ENCODE measurements at regions of chr6 and their contacts with region 1.

Region 1: GRCh38 chr6:128520436-128521281 is at the start of gene PTPRK:
- DNase-seq: peak; percentile 91
- ATAC-seq: peak; percentile 86
- H3K4me3 ChIP-seq: peak within 1 kb of the TSS; percentile 93
- H3K27ac ChIP-seq: peak within 1 kb of the TSS; percentile 98
- H3K4me1 ChIP-seq: peaks cover 5% of the 10 kb centered on the region; the same call in 1 of the 2 replicates
- H3K27me3 ChIP-seq: no peaks in the 10 kb centered on the region
- CTCF ChIP-seq: peak; percentile 69
- POLR2A ChIP-seq: peak; percentile 90
- RAD21 ChIP-seq: peak; percentile 53
- total RNA-seq, gene PTPRK: 66.1 and 80.8 TPM in 2 replicates

Region 2: DNA sequence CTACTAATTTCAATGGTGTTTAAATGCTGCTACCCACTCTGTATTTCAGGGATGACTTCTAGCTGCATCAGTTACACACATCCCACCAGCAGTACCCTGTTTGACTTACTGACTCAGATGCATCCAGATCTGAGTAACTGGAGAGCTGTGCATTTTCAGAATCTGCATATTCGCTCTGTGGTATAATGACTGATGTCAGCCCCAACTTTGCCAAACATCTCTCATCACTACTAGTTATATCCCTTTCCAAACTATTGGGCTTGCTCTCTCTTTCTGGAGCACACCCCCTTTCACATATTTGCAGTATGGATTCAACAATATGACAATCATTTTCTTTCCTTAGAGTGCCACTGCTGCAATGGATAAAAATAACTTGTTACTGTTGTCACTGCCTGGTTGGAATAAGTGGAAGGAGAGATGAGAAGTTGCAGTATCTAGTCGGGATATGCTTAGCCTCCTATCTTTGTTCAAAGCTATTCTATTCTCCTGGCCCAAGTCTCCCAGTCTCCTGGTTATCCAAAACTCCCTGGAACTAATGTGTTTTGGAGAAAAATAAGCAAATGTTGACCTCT is 1405.5 kb before region 1 on chr6:
- CTCF ChIA-PET with region 1: no interaction called
- POLR2A ChIA-PET with region 1: no interaction called
- dilution Hi-C with region 1: no loop called
- in situ Hi-C with region 1: no loop called
- intact Hi-C with region 1: no loop called
- DNase-seq: no peak
- ATAC-seq: no peak
- H3K4me3 ChIP-seq: no peak overlapping the region
- H3K27ac ChIP-seq: no peak overlapping the region
- H3K4me1 ChIP-seq: no peaks in the 10 kb centered on the region; the same call in 1 of the 2 replicates
- H3K27me3 ChIP-seq: peaks cover 58% of the 10 kb centered on the region
- CTCF ChIP-seq: no peak
- POLR2A ChIP-seq: no peak
- RAD21 ChIP-seq: no peak

Region 3: DNA sequence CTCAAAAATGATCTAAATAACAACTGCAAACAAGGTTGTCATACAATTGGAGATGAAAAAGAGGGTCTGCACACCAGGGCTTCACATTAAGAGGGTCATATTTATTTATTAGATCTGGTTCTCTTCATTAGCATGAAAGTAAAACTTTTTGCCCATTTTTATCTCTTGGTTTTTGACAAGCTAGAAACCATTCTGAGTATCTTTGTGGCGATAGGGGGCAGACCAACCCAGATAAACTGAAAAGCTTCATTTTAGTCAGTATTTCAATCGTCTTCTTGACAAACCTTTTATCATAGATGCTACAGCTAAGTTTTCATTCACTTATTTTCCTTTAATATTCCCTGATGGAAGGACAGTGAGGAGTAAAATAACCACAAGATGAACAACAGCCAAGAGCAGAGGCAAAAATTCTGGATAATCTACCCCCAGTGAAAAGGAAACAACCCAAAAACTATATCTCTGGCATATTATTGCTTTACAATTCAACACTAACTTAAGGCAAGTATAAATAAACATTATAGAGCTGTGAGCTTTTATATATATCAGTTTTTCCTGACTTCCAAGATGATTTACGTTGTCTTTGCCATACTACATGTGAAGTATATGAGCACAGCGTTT is 665.0 kb before region 1 on chr6:
- CTCF ChIA-PET with region 1: no interaction called
- POLR2A ChIA-PET with region 1: no interaction called
- dilution Hi-C with region 1: no loop called
- in situ Hi-C with region 1: no loop called
- intact Hi-C with region 1: loop called (anchors 2 kb)
- DNase-seq: peak; percentile 45
- ATAC-seq: peak; percentile 60; the same call in 1 of the 2 replicates
- H3K4me3 ChIP-seq: no peak overlapping the region
- H3K27ac ChIP-seq: no peak overlapping the region
- H3K4me1 ChIP-seq: no peaks in the 10 kb centered on the region
- H3K27me3 ChIP-seq: no peaks in the 10 kb centered on the region
- CTCF ChIP-seq: peak; percentile 61
- POLR2A ChIP-seq: no peak
- RAD21 ChIP-seq: peak; percentile 65

Region 4: DNA sequence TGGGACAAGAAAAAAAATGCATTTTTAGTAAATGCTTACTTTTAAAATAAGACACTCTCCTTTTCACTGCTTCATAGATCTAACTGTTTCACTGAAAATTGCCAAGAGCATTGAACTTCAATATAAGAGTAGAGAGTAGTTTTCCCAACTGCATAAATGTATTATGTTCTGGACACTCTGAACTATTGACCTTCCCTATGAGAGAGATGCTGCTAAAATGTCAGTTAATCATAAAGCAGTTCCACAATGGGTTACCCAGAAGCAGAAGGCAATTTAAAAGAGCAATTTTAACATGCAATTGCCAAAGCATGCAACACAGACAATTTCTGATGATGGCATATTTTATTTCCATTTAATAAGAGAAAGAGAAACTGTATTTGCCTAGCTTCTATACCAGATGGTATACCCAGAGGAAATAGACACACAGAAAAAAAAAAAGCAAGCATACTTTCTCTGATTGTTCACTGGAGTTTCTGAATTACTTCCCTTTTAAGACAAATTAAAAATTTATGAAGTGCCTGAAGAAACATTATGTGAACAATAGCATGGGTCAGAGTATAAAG is 340.7 kb before region 1 on chr6:
- CTCF ChIA-PET with region 1: no interaction called
- POLR2A ChIA-PET with region 1: no interaction called
- dilution Hi-C with region 1: no loop called
- in situ Hi-C with region 1: no loop called
- intact Hi-C with region 1: loop called (anchors 10 kb)
- DNase-seq: no peak
- ATAC-seq: no peak
- H3K4me3 ChIP-seq: no peak overlapping the region
- H3K27ac ChIP-seq: no peak overlapping the region
- H3K4me1 ChIP-seq: no peaks in the 10 kb centered on the region
- H3K27me3 ChIP-seq: no peaks in the 10 kb centered on the region
- CTCF ChIP-seq: no peak
- POLR2A ChIP-seq: no peak
- RAD21 ChIP-seq: no peak

Region 5: DNA sequence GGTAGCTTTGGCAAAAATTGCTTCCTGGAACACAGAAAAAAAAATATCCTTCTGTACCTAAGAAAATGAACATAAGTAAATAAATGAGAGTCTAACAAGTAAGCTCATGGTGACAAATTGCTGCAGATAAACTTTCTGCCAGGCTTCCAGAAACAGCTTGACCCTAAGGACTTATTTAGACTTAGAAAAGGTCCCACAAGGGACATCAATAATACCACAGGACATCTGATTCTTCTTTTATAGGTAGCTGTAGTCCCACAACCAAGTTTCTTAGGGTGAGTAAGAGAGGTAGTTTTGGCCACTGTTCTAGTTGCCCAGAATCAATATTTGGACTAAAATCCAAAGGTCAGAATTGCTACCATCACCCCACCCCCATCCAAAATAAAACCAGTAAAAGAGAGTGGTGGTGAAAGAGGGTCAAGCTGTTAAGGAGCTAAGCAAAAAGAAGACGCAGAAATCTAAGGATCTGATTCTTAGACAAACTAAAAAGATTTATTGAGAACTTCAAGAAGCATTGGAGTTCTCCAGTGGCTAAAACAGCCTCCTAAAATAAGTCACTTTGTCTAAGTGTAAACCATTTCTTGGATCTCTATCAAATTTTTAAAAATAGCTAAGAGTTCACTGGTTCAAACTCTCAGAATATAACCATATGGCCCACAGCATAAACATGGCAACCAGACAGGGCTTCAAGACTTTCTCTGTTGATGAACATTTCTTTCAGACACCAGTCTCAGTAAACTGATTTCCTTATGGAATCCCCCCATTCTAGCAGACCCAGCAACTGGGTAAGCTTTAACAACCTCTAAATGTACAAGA is 180.8 kb before region 1 on chr6:
- CTCF ChIA-PET with region 1: no interaction called
- POLR2A ChIA-PET with region 1: no interaction called
- dilution Hi-C with region 1: no loop called
- in situ Hi-C with region 1: no loop called
- intact Hi-C with region 1: loop called (anchors 5 kb)
- DNase-seq: peak; percentile 74
- ATAC-seq: peak; percentile 59
- H3K4me3 ChIP-seq: no peak overlapping the region
- H3K27ac ChIP-seq: peak overlapping the region; percentile 58; the same call in 1 of the 2 replicates
- H3K4me1 ChIP-seq: peaks cover 9% of the 10 kb centered on the region
- H3K27me3 ChIP-seq: no peaks in the 10 kb centered on the region
- CTCF ChIP-seq: no peak
- POLR2A ChIP-seq: no peak
- RAD21 ChIP-seq: no peak

Region 6: DNA sequence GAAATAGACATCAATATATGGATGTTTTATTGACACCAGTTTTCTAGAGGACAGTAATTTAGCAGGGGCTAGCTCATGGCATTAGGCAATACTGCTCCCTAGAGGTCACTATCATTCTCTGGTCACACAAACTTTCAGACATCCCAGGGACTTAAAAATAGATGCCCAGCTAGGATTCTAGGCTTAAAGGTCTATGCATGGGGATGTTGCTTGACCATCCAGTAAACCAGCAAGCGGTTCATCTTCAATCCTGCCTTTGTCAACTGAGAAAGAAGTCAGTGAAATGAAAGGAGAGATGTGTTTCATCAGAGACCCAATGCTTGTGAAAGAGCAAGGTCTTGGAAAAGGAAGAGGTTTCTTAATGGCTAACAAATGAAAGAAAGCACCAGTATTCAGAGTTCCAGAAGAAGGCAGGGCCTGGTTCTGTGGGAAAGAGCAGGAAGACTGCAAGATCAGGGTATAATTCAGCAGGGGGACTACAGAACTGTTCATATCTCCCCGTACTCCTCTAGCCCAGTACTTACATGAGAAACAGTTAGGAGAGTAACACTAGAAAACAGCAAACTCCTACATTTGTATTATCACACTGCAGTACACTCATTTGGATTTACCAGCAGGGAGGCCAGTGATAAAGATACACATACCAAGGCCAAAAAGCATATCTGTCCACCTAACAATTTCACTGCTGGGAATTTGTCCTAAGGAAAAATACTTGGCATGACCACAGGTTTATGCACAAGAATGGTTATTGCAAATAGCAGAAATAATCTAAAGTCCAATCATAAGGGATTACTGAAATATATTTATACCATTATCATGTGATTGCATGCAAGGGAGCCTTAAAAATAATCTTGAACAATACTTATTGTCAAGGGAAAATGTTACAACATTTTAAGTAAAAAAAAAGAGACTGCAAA is 210.8 kb after region 1 on chr6:
- CTCF ChIA-PET with region 1: interaction called, 3 read pairs
- POLR2A ChIA-PET with region 1: no interaction called
- dilution Hi-C with region 1: no loop called
- in situ Hi-C with region 1: loop called (anchors 10 kb)
- intact Hi-C with region 1: loop called (anchors 2 kb)
- DNase-seq: peak; percentile 66
- ATAC-seq: peak; percentile 86
- H3K4me3 ChIP-seq: no peak overlapping the region
- H3K27ac ChIP-seq: no peak overlapping the region
- H3K4me1 ChIP-seq: no peaks in the 10 kb centered on the region
- H3K27me3 ChIP-seq: no peaks in the 10 kb centered on the region; the same call in 1 of the 2 replicates
- CTCF ChIP-seq: peak; percentile 80
- POLR2A ChIP-seq: 0 out of 2 replicates have a peak, but pooled peaks have one; percentile 23
- RAD21 ChIP-seq: peak; percentile 93

Region 7: DNA sequence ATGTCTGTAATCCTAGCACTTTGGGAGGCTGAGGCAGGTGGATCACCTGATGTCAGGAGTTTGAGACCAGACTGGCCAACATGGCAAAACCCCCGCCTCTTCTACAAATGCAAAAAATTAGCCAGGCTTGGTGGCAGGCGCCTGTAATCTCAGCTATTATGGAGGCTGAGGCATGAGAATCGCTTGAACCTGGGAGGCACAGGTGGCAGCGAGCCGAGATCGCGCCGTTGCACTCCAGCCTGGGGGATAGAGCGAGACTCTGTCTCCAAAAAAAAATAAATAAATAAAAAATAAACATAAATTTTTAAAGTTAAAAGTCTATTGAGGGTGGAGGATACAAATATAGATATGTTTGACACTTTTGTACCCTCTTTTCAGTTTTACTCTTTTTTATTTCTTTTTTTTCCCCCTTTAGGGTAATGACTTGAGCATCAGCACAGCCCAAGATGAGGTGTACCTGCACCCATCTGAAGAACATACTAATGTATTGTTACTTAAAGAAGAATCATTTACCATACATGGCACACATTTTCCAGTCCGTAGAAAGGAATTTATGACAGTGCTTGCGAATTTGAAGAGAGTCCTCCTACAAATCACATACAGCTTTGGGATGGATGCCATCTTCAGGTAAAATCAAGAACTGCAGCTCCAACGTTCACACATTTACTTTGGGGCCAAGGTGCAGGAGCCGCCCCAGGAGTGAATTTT is 731.2 kb after region 1 on chr6:
- CTCF ChIA-PET with region 1: no interaction called
- POLR2A ChIA-PET with region 1: no interaction called
- dilution Hi-C with region 1: no loop called
- in situ Hi-C with region 1: no loop called
- intact Hi-C with region 1: loop called (anchors 5 kb)
- DNase-seq: peak; percentile 75
- ATAC-seq: peak; percentile 81
- H3K4me3 ChIP-seq: no peak overlapping the region
- H3K27ac ChIP-seq: no peak overlapping the region
- H3K4me1 ChIP-seq: no peaks in the 10 kb centered on the region; the same call in 1 of the 2 replicates
- H3K27me3 ChIP-seq: no peaks in the 10 kb centered on the region
- CTCF ChIP-seq: peak; percentile 80
- POLR2A ChIP-seq: no peak
- RAD21 ChIP-seq: peak; percentile 89

Region 8: DNA sequence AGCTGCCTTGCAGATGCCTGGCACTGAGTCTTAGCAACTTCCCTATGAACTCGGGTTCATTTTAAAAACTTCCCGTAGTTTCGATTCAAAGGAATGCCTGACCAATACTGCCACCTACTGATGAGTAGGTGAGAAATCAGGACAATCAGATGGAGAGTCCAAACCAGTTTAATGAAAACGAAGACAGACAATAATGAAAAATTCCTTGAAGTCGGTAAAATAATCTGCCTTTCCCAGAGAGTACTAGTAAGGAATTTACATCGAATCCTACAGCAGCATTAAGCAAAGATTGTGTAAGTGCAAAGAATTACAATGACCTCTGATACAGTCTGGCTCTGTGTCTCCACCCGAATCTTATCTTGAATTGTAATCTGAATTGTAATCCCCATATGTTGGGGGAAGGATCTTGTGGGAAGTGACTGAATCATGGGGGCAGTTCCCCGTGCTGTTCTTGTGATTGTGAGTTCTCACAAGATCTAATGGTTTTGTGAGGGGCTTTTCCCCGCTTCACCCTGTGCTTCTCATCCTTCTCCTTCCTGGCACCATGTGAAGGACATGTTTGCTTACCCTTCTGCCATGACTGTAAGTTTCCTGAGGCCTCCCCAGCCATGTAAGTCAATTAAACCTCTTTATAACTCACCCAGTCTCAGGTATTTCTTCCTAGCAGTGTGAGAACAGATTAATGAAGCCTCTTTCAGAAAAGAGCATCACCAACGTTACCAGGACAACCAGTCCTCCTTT is 1054.9 kb after region 1 on chr6:
- CTCF ChIA-PET with region 1: no interaction called
- POLR2A ChIA-PET with region 1: no interaction called
- dilution Hi-C with region 1: no loop called
- in situ Hi-C with region 1: no loop called
- intact Hi-C with region 1: loop called (anchors 5 kb)
- DNase-seq: peak; percentile 72
- ATAC-seq: peak; percentile 92
- H3K4me3 ChIP-seq: peak overlapping the region; percentile 22; the same call in 1 of the 2 replicates
- H3K27ac ChIP-seq: no peak overlapping the region
- H3K4me1 ChIP-seq: peaks cover 2% of the 10 kb centered on the region; the same call in 1 of the 2 replicates
- H3K27me3 ChIP-seq: no peaks in the 10 kb centered on the region
- CTCF ChIP-seq: peak; percentile 76
- POLR2A ChIP-seq: no peak
- RAD21 ChIP-seq: peak; percentile 89

Measured in IMR-90 (cell line).